ENCODE measurements at regions of chr16 and their contacts with region 1.

Region 1: GRCh38 chr16:85821441-85822135 is 22.1 kb downstream of the COX4I1 start:
- DNase-seq: peak; percentile 90
- ATAC-seq: peak; percentile 94
- H3K4me3 ChIP-seq: no peak overlapping the region
- H3K4me3 Mint-ChIP-seq: no peak overlapping the region
- H3K27ac ChIP-seq: no peak overlapping the region
- H3K27ac Mint-ChIP-seq: peak overlapping the region; percentile 21
- H3K4me1 ChIP-seq: peaks cover 11 to 32% of the 10 kb centered on the region in 2 donors
- H3K4me1 Mint-ChIP-seq: peaks cover 29% of the 10 kb centered on the region
- H3K27me3 ChIP-seq: no peaks in the 10 kb centered on the region
- H3K27me3 Mint-ChIP-seq: no peaks in the 10 kb centered on the region
- CTCF ChIP-seq: peak; percentile 99

Region 2: GRCh38 chr16:85853547-85854545 is 32.3 kb after region 1 on chr16:
- CTCF ChIA-PET with region 1: interaction called, 13 read pairs
- POLR2A ChIA-PET with region 1: no interaction called
- intact Hi-C with region 1: no loop called
- DNase-seq: no peak
- ATAC-seq: peak; percentile 14
- H3K4me3 ChIP-seq: no peak overlapping the region
- H3K4me3 Mint-ChIP-seq: no peak overlapping the region
- H3K27ac ChIP-seq: no peak overlapping the region
- H3K27ac Mint-ChIP-seq: no peak overlapping the region
- H3K4me1 ChIP-seq: peaks cover 13 to 16% of the 10 kb centered on the region in 2 donors
- H3K4me1 Mint-ChIP-seq: peaks cover 31% of the 10 kb centered on the region
- H3K27me3 ChIP-seq: no peaks in the 10 kb centered on the region
- H3K27me3 Mint-ChIP-seq: no peaks in the 10 kb centered on the region
- CTCF ChIP-seq: no peak

Region 3: GRCh38 chr16:85898521-85899442 is 77.2 kb after region 1 on chr16 and contains the start of gene IRF8:
- CTCF ChIA-PET with region 1: interaction called, 364 read pairs
- POLR2A ChIA-PET with region 1: interaction called, 16 read pairs
- intact Hi-C with region 1: loop called (anchors 1 kb)
- DNase-seq: peak; percentile 94
- ATAC-seq: peak; percentile 65
- H3K4me3 ChIP-seq: peak within 1 kb of the TSS; percentile 77 to 99 (median 88)
- H3K4me3 Mint-ChIP-seq: peak within 1 kb of the TSS; percentile 92
- H3K27ac ChIP-seq: peak within 1 kb of the TSS; percentile 93 to 97
- H3K27ac Mint-ChIP-seq: peak within 1 kb of the TSS; percentile 98
- H3K4me1 ChIP-seq: peaks cover 41 to 52% of the 10 kb centered on the region in 2 donors
- H3K4me1 Mint-ChIP-seq: peaks cover 63% of the 10 kb centered on the region
- H3K27me3 ChIP-seq: no peaks in the 10 kb centered on the region
- H3K27me3 Mint-ChIP-seq: no peaks in the 10 kb centered on the region
- CTCF ChIP-seq: no peak
- total RNA-seq, gene IRF8: 332 and 337 TPM in 2 replicates

Region 4: DNA sequence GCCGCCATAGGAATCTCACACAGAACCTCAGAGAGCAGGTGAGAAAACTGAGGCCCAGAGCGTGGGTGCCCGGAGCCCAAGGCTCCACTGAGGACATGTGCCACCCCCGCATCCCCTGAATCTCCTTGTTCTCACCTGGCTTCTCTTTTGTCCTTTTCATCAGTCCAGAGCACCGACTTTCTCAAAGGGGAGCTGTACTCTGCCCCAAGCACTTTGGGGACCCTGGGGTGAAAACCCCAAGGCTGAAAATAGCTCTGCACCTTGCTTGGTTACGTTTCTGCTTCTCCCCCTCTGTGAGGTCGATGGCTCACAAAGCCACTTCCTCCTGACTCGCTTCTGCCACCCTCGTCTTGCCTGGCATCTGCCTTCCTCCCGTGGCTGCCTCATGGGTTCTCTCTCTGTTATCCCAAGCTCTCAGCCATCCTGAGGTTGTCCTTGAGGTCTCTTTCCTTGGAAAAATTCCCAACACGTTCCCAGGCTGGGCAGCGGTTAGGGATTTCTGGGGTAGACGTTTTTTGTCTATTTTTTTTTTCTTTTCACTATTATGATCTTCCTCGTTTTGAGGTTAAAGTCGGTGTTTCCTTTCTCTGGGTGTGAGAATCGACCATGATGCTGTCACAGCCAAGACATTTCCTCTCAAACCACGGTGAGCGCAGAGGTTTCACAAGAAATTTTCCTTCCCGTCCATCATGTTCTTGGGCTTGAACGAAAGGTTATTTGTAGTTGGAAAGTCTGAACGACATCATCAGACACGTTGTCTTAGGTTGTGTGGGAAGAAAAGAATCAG is 114.6 kb after region 1 on chr16:
- CTCF ChIA-PET with region 1: interaction called, 64 read pairs
- POLR2A ChIA-PET with region 1: interaction called, 5 read pairs
- intact Hi-C with region 1: loop called (anchors 1 kb)
- DNase-seq: peak; percentile 92
- ATAC-seq: peak; percentile 80
- H3K4me3 ChIP-seq: peak overlapping the region in 4 of 5 experiments; percentile 47 to 63 (median 55)
- H3K4me3 Mint-ChIP-seq: peak overlapping the region; percentile 81
- H3K27ac ChIP-seq: peak overlapping the region; percentile 96 to 98
- H3K27ac Mint-ChIP-seq: peak overlapping the region; percentile 94
- H3K4me1 ChIP-seq: peaks cover 76 to 85% of the 10 kb centered on the region in 2 donors
- H3K4me1 Mint-ChIP-seq: peaks cover 84% of the 10 kb centered on the region
- H3K27me3 ChIP-seq: no peaks in the 10 kb centered on the region
- H3K27me3 Mint-ChIP-seq: no peaks in the 10 kb centered on the region
- CTCF ChIP-seq: no peak

Region 5: DNA sequence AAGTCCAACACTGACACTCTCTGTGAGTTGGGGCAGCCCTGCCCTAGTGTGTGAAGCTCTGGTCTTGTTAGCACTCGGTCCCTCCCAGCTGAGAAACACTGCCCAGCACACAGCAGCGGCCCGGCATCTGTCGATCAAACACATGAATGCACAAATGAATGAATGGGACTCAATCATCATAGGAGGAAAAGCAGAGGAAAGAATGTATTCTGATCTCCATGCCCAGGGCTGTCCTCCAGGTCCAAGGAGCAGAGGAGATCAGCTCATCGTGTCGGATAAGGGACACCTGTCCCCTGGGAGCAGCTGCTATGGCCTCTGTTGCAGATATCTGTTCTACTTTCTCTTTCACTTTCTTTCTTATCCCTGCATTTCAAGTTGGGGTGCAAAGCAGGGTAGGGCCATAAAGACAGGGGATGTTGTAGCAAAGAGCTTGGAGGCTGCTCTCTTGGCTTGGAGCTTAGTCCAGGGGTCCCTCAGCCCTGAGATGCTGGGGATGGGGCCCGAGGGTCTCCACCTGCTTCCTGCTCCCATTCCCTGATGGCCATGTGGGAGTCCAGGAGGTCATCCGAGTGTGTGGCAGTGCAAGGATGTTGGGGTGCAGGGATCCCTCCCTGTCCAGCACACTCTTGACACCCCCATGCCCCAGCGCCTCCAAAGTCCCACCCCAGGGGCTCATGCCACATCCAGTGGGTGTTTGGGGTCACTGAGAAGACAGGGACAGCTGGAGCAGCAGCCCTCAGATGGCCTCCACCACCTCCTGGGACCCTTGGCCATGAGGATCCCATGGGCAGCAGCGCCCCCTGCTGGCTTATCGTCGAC is 165.6 kb after region 1 on chr16:
- CTCF ChIA-PET with region 1: interaction called, 433 read pairs
- POLR2A ChIA-PET with region 1: interaction called, 9 read pairs
- intact Hi-C with region 1: loop called (anchors 1 kb)
- DNase-seq: peak; percentile 51
- ATAC-seq: no peak
- H3K4me3 ChIP-seq: no peak overlapping the region
- H3K4me3 Mint-ChIP-seq: peak overlapping the region; percentile 83
- H3K27ac ChIP-seq: no peak overlapping the region
- H3K27ac Mint-ChIP-seq: peak overlapping the region; percentile 81
- H3K4me1 ChIP-seq: peaks cover 96 to 100% of the 10 kb centered on the region in 2 donors
- H3K4me1 Mint-ChIP-seq: peaks cover 98% of the 10 kb centered on the region
- H3K27me3 ChIP-seq: no peaks in the 10 kb centered on the region
- H3K27me3 Mint-ChIP-seq: no peaks in the 10 kb centered on the region
- CTCF ChIP-seq: no peak

Region 6: GRCh38 chr16:86072328-86073102 is 250.9 kb after region 1 on chr16:
- CTCF ChIA-PET with region 1: interaction called, 21 read pairs
- POLR2A ChIA-PET with region 1: no interaction called
- intact Hi-C with region 1: no loop called
- DNase-seq: peak; percentile 55
- ATAC-seq: no peak
- H3K4me3 ChIP-seq: no peak overlapping the region
- H3K4me3 Mint-ChIP-seq: no peak overlapping the region
- H3K27ac ChIP-seq: no peak overlapping the region
- H3K27ac Mint-ChIP-seq: no peak overlapping the region
- H3K4me1 ChIP-seq: no peaks in the 10 kb centered on the region
- H3K4me1 Mint-ChIP-seq: no peaks in the 10 kb centered on the region
- H3K27me3 ChIP-seq: peaks cover 0 to 34% (median 8%) of the 10 kb centered on the region in 4 experiments
- H3K27me3 Mint-ChIP-seq: peaks cover 37% of the 10 kb centered on the region
- CTCF ChIP-seq: peak; percentile 77

Measured in B cell (primary cell).